Posterior vena cava (tissue), 2 donors: ENCODE measurements at regions of chr3 and their contacts with region 1.

Region 1: DNA sequence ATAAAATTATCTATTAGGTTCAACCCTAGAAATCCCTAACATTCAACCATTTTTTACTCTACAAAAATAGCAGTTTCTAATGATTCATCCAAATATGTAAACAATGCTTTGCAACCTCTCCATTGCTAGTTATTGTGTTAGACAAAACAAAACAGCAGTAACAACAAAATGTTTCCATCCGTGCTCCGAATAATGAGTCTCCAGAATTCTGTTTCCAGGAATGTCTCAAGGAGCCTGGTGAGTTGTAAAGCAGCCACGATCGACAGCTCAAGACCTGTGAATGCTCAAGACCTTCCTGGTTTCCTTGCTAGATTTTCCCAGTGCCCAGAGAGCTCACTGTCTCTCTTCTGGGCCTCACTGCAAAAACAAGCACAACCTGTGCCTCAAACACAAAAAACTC is 49.9 kb downstream of the CHRD start:
- DNase-seq: peak; percentile 2

Region 2: GRCh38 chr3:184629555-184630160 is 199.9 kb after region 1 on chr3:
- intact Hi-C with region 1: loop called in 1 of 2 experiments (anchors 5 kb)
- DNase-seq: no peak

Region 3: DNA sequence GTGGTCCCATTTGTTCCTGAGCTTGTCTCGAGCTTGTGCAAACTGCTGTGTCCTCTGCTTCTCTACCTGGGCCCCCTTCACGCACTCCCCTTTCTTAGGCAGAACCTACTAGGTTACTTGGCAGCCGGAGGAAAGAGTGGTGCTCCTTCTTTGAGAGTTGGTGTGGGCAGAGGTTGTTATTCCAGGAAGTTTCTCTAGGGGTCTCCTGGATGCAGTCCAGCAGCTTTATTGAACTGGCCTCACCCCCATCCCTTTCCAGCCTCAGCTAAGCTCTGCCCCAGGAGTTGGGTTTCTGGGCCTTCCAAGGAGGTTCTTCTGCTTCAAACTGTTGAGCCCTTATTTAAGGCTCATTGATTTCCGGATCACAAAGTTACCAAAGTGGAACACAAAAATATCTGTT is 619.9 kb after region 1 on chr3:
- intact Hi-C with region 1: no loop called
- DNase-seq: no peak